Ascending aorta (tissue), 2 donors: ENCODE measurements at regions of chr15 and their contacts with region 1.

Region 1: GRCh38 chr15:90362936-90363212 is 10.8 kb downstream of the ZNF774 start:
- DNase-seq: no peak
- H3K4me3 ChIP-seq: no peak overlapping the region
- H3K27ac ChIP-seq: peak overlapping the region in 1 of 2 donors; percentile 90
- H3K4me1 ChIP-seq: peaks cover 4 to 28% of the 10 kb centered on the region in 2 donors
- H3K27me3 ChIP-seq: no peaks in the 10 kb centered on the region
- CTCF ChIP-seq: no peak

Region 2: DNA sequence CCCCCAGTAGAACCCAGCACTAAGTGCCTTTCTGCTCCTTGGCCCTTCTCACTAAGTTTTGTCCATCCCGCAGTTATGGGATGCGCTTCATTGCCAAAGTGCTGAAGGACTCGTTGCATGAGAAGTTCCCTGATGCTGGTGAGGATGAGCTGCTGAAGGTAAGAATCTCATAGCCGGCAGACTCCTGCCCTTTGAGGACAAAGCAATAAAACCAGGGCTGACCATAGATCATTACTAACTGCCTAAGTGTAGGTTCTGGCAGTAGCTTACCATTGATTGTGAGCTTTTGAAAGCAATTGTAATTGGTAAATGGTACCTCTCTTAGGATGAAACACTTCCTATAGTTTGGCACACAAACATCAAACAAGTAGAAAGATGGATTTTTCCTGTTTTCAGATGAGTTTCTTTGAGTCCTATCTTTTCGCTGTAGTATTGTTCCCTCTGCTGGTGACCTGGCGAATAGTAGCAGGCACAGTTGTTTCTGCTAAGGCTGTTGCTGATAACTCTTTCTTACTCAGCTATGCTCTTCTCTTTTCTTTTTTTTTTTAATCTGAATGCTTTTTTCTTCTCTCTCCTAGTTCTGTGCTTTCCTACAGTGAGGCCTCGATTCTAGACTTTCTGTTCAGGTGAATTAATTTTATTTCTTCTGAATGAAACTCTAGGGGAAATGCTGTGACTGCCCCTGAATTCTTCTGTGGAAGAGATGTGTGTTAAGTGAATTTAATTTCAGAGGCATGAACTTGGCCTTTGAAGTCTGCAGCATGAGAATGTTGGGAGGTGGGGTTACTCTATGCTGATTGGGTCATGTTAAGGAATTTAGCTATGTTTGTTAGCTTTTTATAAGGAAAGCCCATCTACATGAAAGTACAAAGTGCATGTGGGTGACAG is 119.5 kb after region 1 on chr15:
- intact Hi-C with region 1: loop called (anchors 2 kb)
- DNase-seq: no peak
- H3K4me3 ChIP-seq: no peak overlapping the region
- H3K27ac ChIP-seq: peak overlapping the region; percentile 47 to 49
- H3K4me1 ChIP-seq: peaks cover 0 to 4% of the 10 kb centered on the region in 2 donors
- H3K27me3 ChIP-seq: no peaks in the 10 kb centered on the region
- CTCF ChIP-seq: peak; percentile 61 to 76 (median 62)